ENCODE measurements at regions of chr11 and their contacts with region 1.

Region 1: DNA sequence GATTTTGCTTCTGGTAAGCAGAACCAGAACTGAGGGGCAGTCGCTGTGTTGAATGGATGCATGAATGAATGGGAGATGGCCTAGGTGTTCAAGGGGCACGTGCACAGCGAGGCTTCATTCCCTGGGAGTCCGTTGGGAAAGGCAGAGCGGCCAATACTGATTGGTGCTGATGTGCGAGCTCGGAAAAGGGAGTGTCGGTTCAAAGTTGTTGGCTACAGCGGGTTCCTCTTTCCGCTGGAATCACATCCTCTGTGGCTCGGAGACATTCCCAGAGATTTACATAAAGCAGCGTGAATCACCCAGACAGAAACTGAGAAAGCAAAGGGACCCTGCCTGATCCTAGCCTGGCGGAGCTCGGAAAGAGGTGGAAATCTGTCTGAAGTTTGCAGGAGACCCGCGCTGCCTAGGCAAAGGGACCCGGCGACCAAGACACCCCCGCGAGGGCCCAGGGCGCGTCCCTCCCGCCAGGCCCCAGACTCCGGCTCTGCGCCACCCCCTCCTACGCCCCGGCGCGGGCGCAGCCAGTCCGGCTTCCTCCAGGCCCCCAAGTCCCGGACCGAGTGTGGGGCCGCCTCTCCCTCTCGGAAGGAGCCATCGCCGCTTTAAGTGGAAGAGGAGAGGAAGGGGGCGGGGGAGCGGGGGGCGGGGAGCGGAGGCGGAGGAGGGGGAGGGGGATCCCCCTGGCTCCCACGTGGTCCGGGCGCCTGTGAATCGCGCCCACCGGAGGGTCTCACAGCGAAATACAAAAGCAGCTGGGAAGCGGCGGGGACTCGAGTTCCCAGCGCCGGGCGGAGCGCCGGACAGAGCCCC is at the start of gene FJX1:
- DNase-seq: peak; percentile 4 to 12
- ATAC-seq: peak; percentile 52 to 53
- H3K4me3 ChIP-seq: peak within 1 kb of the TSS; percentile 55 to 78 (median 64)
- H3K27ac ChIP-seq: peak within 1 kb of the TSS; percentile 56 to 63 (median 60)
- H3K4me1 ChIP-seq: peaks cover 9 to 22% of the 10 kb centered on the region in 2 donors
- H3K27me3 ChIP-seq: peaks cover 0 to 8% (median 2%) of the 10 kb centered on the region in 3 donors
- CTCF ChIP-seq: no peak
- POLR2A ChIP-seq: no peak
- total RNA-seq, gene FJX1: 1.5 to 10.8 (median 2.0) TPM

Region 2: GRCh38 chr11:35822815-35823495 is 205.1 kb after region 1 on chr11:
- in situ Hi-C with region 1: loop called (anchors 5 to 10 kb)
- intact Hi-C with region 1: loop called (anchors 2 kb)
- DNase-seq: no peak
- ATAC-seq: no peak
- H3K4me3 ChIP-seq: no peak overlapping the region
- H3K27ac ChIP-seq: no peak overlapping the region
- H3K4me1 ChIP-seq: peaks cover 11 to 14% of the 10 kb centered on the region in 2 donors
- H3K27me3 ChIP-seq: no peaks in the 10 kb centered on the region
- CTCF ChIP-seq: no peak
- POLR2A ChIP-seq: no peak

Region 3: GRCh38 chr11:36073411-36074203 is 455.7 kb after region 1 on chr11:
- in situ Hi-C with region 1: no loop called
- intact Hi-C with region 1: loop called (anchors 10 kb)
- DNase-seq: peak; percentile 86
- ATAC-seq: peak; percentile 96
- H3K4me3 ChIP-seq: peak overlapping the region in 1 of 4 donors; percentile 19
- H3K27ac ChIP-seq: peak overlapping the region; percentile 47 to 71 (median 66)
- H3K4me1 ChIP-seq: peaks cover 23 to 31% of the 10 kb centered on the region in 2 donors
- H3K27me3 ChIP-seq: no peaks in the 10 kb centered on the region
- CTCF ChIP-seq: no peak
- POLR2A ChIP-seq: peak in 1 of 2 donors; percentile 23

Region 4: DNA sequence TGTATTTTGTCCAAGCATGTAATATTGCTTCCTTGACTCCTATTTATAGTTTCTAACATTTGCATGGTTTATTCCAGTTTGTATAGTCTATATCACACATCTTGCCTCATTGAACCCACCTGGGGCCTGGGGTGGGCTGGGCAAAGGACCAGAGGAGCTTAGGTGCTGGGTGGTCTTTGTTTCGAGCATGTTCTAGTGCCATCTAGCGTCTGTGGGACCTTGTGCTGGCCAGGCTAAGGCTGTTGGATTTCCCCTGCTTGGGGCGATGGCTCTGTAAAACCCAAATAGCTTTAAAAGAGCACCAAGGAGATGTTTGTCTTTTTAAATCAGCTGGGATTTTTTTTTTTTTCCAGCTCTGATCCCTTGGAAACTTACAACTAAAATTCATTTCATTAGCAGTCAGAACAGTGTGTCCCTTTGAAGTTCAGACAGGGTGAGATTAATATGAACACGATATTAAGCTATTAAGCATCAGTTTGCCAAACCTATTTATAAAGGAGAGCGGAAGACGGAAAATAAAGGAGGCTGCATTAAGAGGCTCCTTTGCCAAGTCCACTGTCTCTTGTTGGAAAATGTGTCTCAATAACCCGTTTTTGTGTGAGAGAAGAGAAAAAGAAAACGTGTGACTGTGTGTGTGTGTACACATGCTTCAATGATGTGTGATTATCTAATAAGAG is 514.0 kb after region 1 on chr11:
- in situ Hi-C with region 1: loop called (anchors 5 to 25 kb)
- intact Hi-C with region 1: loop called (anchors 2 kb)
- DNase-seq: peak; percentile 31 to 35
- ATAC-seq: peak; percentile 69 to 75
- H3K4me3 ChIP-seq: no peak overlapping the region
- H3K27ac ChIP-seq: no peak overlapping the region
- H3K4me1 ChIP-seq: peaks cover 0 to 14% of the 10 kb centered on the region in 2 donors
- H3K27me3 ChIP-seq: no peaks in the 10 kb centered on the region
- CTCF ChIP-seq: peak; percentile 35 to 78 (median 61)
- POLR2A ChIP-seq: no peak

Region 5: GRCh38 chr11:36258730-36259360 is 641.0 kb after region 1 on chr11:
- in situ Hi-C with region 1: loop called in 3 of 4 experiments (anchors 5 kb)
- intact Hi-C with region 1: loop called (anchors 2 kb)
- DNase-seq: peak; percentile 33 to 37
- ATAC-seq: peak; percentile 60 to 84
- H3K4me3 ChIP-seq: no peak overlapping the region
- H3K27ac ChIP-seq: no peak overlapping the region
- H3K4me1 ChIP-seq: no peaks in the 10 kb centered on the region
- H3K27me3 ChIP-seq: no peaks in the 10 kb centered on the region
- CTCF ChIP-seq: peak; percentile 27 to 60 (median 52)
- POLR2A ChIP-seq: no peak

Region 6: GRCh38 chr11:36492724-36493304 is 874.9 kb after region 1 on chr11:
- in situ Hi-C with region 1: loop called in 3 of 4 experiments (anchors 25 kb)
- intact Hi-C with region 1: loop called (anchors 5 kb)
- DNase-seq: no peak
- ATAC-seq: peak in 1 of 2 donors; percentile 58
- H3K4me3 ChIP-seq: no peak overlapping the region
- H3K27ac ChIP-seq: no peak overlapping the region
- H3K4me1 ChIP-seq: peaks cover 2 to 8% of the 10 kb centered on the region in 2 donors
- H3K27me3 ChIP-seq: no peaks in the 10 kb centered on the region
- CTCF ChIP-seq: peak; percentile 37 to 79 (median 58)
- POLR2A ChIP-seq: no peak

Measured in gastrocnemius medialis (tissue), 4 donors.